T-cell (primary cell): ENCODE measurements at regions of chr1 and their contacts with region 1.

Region 1: DNA sequence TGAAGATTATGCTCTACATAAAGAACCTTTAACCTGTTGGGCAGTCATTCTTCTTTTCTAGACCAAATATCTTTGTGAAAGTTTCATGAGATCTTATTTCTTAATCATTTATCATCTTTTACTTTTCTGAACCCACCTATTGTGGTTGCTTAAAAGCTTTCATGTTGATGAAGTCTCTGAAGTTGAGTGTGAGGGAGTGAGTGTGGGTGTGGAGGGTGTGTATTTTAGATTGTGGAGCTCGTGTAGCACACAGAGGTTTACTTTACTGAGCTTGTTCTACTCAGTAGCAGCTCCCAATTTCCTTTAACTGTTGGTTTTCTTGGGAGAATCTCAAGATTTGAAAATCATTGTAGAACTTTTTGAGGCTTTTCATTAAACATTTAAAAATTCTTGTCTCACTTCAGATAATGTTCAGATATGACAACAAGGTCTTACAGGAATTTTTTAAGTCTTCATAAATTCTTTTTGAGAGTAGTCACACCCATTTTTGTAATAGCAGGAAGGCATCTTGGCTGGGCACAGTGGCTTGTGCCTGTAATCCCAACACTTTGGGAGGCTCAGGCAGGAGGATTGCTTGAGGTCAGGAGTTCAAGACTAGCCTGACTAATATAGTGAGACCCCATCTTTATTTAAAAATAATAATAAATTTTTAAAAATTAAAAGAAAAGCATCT is 17.0 kb downstream of the SRRM1 start:
- DNase-seq: no peak
- ATAC-seq: peak in 1 of 4 experiments; percentile 43
- H3K4me3 ChIP-seq: no peak overlapping the region
- H3K4me3 Mint-ChIP-seq: no peak overlapping the region
- H3K27ac ChIP-seq: no peak overlapping the region
- H3K27ac Mint-ChIP-seq: peak overlapping the region; percentile 61 to 78
- H3K4me1 ChIP-seq: no peaks in the 10 kb centered on the region
- H3K4me1 Mint-ChIP-seq: peaks cover 30 to 37% (median 34%) of the 10 kb centered on the region in 3 donors
- H3K27me3 ChIP-seq: no peaks in the 10 kb centered on the region
- H3K27me3 Mint-ChIP-seq: no peaks in the 10 kb centered on the region

Region 2: GRCh38 chr1:24648919-24649318 is 11.2 kb before region 1 on chr1:
- CTCF ChIA-PET with region 1: interaction called in 1 of 2 experiments, 4 read pairs
- POLR2A ChIA-PET with region 1: interaction called, 8 to 11 read pairs
- DNase-seq: no peak
- ATAC-seq: no peak
- H3K4me3 ChIP-seq: no peak overlapping the region
- H3K4me3 Mint-ChIP-seq: no peak overlapping the region
- H3K27ac ChIP-seq: no peak overlapping the region
- H3K27ac Mint-ChIP-seq: no peak overlapping the region
- H3K4me1 ChIP-seq: peaks cover 5 to 14% of the 10 kb centered on the region in 2 experiments
- H3K4me1 Mint-ChIP-seq: peaks cover 49 to 54% (median 52%) of the 10 kb centered on the region in 3 donors
- H3K27me3 ChIP-seq: no peaks in the 10 kb centered on the region
- H3K27me3 Mint-ChIP-seq: no peaks in the 10 kb centered on the region